ENCODE measurements at regions of chr13 and their contacts with region 1.

Region 1: GRCh38 chr13:31424117-31424729 is 224.4 kb downstream of the B3GLCT start:
- DNase-seq: peak; percentile 24
- ATAC-seq: peak; percentile 75
- H3K4me3 Mint-ChIP-seq: no peak overlapping the region
- H3K27ac Mint-ChIP-seq: no peak overlapping the region
- H3K4me1 Mint-ChIP-seq: no peaks in the 10 kb centered on the region
- H3K27me3 Mint-ChIP-seq: peaks cover 2% of the 10 kb centered on the region
- CTCF ChIP-seq: no peak

Region 2: DNA sequence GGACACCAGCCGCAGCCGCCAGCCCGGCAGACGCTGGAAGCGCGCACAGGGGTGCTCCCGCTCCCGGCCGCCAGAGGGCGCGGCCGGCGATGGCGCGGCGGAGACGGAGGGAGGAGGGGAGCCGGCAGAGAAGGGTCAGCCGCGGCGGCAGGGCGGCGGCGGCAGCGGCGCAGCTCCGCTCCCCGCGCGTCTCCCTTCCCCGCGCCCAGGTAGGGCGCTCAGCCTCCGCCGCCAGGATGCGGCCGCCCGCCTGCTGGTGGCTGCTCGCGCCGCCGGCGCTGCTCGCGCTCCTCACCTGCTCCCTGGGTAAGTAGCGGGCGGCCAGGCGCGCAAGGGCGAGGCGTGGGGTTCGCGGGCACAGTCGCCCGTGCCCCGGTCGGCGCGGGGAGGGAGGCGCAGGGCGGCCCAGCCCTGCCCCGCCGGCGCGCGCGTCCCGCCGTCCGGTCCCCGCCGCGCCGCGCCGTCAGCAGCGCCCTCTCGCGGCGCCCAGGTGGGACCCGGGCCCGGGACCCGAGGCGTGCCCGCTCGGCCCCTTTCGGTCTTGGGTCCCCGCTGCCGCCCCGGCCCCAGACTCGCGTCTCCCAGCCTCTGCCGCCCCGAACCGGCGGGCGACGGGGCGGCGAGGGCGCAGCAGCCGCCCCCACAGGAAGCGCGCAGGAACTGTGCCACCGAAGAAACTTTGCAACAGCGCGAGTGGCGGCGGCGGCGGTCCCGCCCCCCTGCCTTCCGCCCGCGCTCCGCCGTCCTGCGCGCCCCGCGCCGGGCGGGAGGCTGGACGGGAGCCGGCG is 224.2 kb before region 1 on chr13 and contains the start of gene B3GLCT:
- CTCF ChIA-PET with region 1: interaction called, 6 read pairs
- POLR2A ChIA-PET with region 1: no interaction called
- intact Hi-C with region 1: loop called (anchors 1 kb)
- DNase-seq: peak; percentile 87
- ATAC-seq: peak; percentile 83
- H3K4me3 Mint-ChIP-seq: peak within 1 kb of the TSS; percentile 84
- H3K27ac Mint-ChIP-seq: peak within 1 kb of the TSS; percentile 84
- H3K4me1 Mint-ChIP-seq: peaks cover 18% of the 10 kb centered on the region
- H3K27me3 Mint-ChIP-seq: no peaks in the 10 kb centered on the region
- CTCF ChIP-seq: peak; percentile 63
- total RNA-seq, gene B3GLCT: 2.9 and 3.0 TPM in 2 replicates

Region 3: DNA sequence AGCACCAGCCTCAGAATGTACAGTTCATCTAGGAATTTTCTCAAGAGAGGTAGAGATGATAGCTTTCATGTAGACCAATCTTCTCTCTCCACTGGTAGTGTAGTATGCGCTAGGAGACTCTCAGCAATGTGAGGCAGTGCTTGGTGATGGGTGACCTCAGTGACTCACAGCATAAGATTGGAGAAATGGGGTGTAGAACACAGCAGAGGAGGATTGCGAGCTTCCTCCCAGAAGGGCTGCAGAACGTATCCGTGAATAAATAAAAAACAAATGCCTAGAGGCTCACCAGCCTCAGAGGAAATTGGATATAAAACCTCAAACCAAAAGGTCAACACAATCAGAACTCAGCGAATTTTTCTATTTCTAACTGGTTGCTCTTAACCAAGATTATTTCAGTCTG is 132.2 kb after region 1 on chr13:
- CTCF ChIA-PET with region 1: no interaction called
- POLR2A ChIA-PET with region 1: no interaction called
- intact Hi-C with region 1: no loop called
- DNase-seq: no peak
- ATAC-seq: no peak
- H3K4me3 Mint-ChIP-seq: no peak overlapping the region
- H3K27ac Mint-ChIP-seq: no peak overlapping the region
- H3K4me1 Mint-ChIP-seq: no peaks in the 10 kb centered on the region
- H3K27me3 Mint-ChIP-seq: no peaks in the 10 kb centered on the region
- CTCF ChIP-seq: no peak

Measured in activated B cell treated with CpG ODN at 0.5 μM for 24 hours (primary cell).